Sigmoid colon (tissue), 7 donors: ENCODE measurements at regions of chr3 and their contacts with region 1.

Region 1: DNA sequence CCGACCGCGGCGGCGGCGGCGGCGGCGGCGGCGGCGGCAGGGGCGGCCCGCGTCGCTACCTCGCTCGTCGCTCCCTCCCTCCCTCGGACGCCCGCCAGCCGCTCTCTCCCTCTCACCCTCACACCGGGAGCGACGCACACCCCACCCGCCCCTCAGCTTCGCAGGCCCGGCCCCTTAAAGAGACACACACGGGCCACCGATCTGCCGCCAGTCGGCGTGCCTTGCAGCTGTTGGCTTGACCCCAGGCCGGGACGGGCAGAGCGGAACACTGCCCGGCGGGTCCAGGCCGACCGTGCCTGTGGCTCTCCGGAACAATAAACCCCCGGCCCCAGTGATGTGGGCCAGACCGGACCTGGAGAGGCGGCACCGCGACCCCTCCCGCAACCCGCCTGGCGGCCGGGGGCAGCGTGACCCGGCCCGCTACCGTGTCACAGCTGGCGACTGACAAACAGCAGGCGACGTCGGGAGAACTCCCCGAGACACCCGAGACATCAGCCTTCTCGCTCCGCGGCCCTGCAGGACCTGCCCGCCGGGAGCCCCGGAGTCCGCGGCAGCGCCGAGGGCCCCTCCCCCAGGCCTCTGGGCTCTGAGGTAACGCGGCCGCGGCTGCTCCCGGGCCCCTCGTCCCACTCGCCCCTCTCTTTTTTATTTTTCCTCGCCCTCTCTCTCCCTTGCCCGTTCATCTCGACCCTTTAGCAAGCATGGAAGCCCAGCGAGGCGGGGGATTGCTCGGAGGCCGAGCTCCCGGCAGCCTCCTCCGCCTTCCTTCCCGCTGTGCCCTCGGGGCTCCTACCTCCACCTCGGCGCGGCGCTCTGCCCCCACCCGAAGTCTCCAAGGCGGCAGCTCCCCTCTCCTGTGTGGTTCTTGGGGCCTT is at the start of gene SETD2:
- DNase-seq: peak; percentile 98
- H3K4me3 ChIP-seq: peak within 1 kb of the TSS; percentile 67 to 96 (median 82)
- H3K27ac ChIP-seq: peak within 1 kb of the TSS; percentile 92 to 98 (median 96)
- H3K4me1 ChIP-seq: peaks cover 0 to 54% (median 51%) of the 10 kb centered on the region in 4 donors
- H3K27me3 ChIP-seq: no peaks in the 10 kb centered on the region
- CTCF ChIP-seq: peak in 3 of 4 experiments; percentile 35 to 61 (median 54)
- EP300 ChIP-seq: no peak
- POLR2A ChIP-seq: peak in 1 of 2 donors; percentile 20
- total RNA-seq, gene SETD2: 52.3 to 72.6 (median 59.0) TPM

Region 2: DNA sequence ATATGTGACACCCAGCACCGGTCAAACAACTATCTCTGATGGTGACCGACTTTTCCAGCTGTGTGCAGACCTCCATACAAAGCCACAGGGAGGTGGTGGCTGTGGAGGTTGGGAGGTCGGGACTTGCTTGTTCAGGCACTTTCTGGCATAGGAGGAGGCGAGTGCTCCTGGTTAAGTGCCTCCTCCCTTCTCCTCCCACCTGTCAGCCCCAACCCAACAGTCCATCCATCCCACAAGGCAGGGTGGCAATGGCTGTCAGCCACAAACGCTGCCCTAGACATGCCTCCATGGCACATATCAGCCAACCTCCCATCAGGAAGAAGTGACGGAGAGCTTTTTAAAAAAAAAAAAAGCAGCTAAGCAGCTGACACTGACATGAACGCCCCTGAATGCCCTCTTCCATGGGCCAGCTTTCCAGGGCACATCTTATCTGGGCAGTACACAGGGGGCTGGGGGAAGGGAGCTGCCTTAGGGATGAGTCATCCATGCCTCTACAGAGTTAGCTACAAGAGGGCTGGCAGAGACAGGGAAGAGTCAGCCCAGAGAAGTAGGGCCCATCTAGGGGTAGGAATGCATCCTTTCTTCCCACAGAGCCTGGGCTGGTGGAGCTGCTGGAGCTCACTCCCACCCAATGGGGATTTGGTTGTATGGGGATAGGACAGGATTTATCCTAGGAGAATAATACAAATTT is 228.9 kb before region 1 on chr3:
- intact Hi-C with region 1: loop called (anchors 10 kb)
- DNase-seq: peak; percentile 95
- H3K4me3 ChIP-seq: no peak overlapping the region
- H3K27ac ChIP-seq: peak overlapping the region; percentile 78 to 91 (median 84)
- H3K4me1 ChIP-seq: peaks cover 0 to 97% (median 86%) of the 10 kb centered on the region in 4 donors
- H3K27me3 ChIP-seq: no peaks in the 10 kb centered on the region
- CTCF ChIP-seq: peak; percentile 50 to 82 (median 70)
- EP300 ChIP-seq: peak in 3 of 4 donors; percentile 21 to 67 (median 41)
- POLR2A ChIP-seq: no peak

Region 3: DNA sequence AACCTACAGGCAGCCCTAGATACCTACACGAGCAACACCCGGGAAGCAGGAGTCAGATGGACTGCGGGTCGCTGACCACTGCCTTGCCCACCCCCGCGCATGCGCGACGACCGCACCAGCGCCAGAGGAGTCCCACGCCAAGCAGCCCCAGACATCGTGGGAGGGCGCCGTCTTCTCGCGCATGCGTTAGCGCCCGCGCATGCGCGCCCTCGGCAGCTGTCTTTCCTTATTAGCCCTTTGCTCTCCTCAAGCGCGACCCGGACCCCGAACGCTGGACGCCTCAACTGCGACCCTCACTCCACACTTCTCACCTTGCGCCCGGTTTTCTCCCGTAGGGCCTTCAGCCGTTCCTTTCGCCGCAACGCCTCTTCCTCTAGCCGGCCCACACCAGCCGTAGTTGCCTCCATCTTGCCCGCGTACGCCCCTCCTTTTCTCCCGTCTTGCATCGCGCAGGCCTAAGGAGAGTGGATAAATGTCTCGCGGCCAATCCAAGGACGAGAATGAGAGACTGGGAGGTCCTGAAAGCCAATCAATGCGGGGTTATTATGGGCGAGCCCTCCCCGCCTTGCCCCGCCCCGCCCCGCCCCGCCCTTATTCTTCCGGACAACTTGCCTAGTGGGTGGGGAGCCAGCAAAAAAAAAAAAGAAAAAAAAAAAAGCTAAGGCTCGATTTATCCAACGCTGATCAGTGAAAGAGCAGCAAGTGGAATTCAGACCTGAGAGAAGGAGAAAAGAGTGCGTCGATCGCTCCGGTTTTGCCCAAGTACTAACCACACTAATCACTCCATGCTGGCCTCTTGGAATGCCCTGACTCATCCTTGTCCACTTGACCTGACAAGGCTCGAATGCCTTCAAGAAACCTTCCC is 187.7 kb before region 1 on chr3 and contains the start of gene CCDC12:
- intact Hi-C with region 1: loop called (anchors 5 kb)
- DNase-seq: peak; percentile 99
- H3K4me3 ChIP-seq: peak within 1 kb of the TSS; percentile 47 to 86 (median 80)
- H3K27ac ChIP-seq: peak within 1 kb of the TSS; percentile 91 to 95 (median 94)
- H3K4me1 ChIP-seq: peaks cover 0 to 71% (median 56%) of the 10 kb centered on the region in 4 donors
- H3K27me3 ChIP-seq: no peaks in the 10 kb centered on the region
- CTCF ChIP-seq: no peak
- EP300 ChIP-seq: no peak
- POLR2A ChIP-seq: peak; percentile 80 to 95
- total RNA-seq, gene CCDC12: 33.1 to 41.0 (median 36.6) TPM

Region 4: GRCh38 chr3:47009225-47010110 is 154.8 kb before region 1 on chr3:
- intact Hi-C with region 1: loop called (anchors 10 kb)
- DNase-seq: peak; percentile 97
- H3K4me3 ChIP-seq: peak overlapping the region; percentile 55 to 67 (median 57)
- H3K27ac ChIP-seq: peak overlapping the region; percentile 86 to 93 (median 90)
- H3K4me1 ChIP-seq: peaks cover 0 to 15% (median 9%) of the 10 kb centered on the region in 4 donors
- H3K27me3 ChIP-seq: no peaks in the 10 kb centered on the region
- CTCF ChIP-seq: no peak
- EP300 ChIP-seq: no peak
- POLR2A ChIP-seq: peak; percentile 85 to 87

Region 5: GRCh38 chr3:47282424-47283192 is 118.4 kb after region 1 on chr3 and contains the starts of genes KIF9 and KLHL18:
- intact Hi-C with region 1: loop called (anchors 1 kb)
- DNase-seq: peak; percentile 97
- H3K4me3 ChIP-seq: peak within 1 kb of the TSS; percentile 73 to 91 (median 85)
- H3K27ac ChIP-seq: peak within 1 kb of the TSS; percentile 85 to 96 (median 90)
- H3K4me1 ChIP-seq: peaks cover 0 to 46% (median 44%) of the 10 kb centered on the region in 4 donors
- H3K27me3 ChIP-seq: no peaks in the 10 kb centered on the region
- CTCF ChIP-seq: no peak
- EP300 ChIP-seq: peak in 2 of 4 donors; percentile 39 to 60
- POLR2A ChIP-seq: peak in 1 of 2 donors; percentile 60
- total RNA-seq, gene KIF9: 5.3 to 16.1 (median 9.0) TPM
- total RNA-seq, gene KLHL18: 10.3 to 33.8 (median 11.7) TPM

Region 6: GRCh38 chr3:47324278-47324865 is 160.1 kb after region 1 on chr3:
- intact Hi-C with region 1: loop called (anchors 5 kb)
- DNase-seq: peak; percentile 74
- H3K4me3 ChIP-seq: no peak overlapping the region
- H3K27ac ChIP-seq: no peak overlapping the region
- H3K4me1 ChIP-seq: peaks cover 0 to 4% (median 2%) of the 10 kb centered on the region in 4 donors
- H3K27me3 ChIP-seq: no peaks in the 10 kb centered on the region
- CTCF ChIP-seq: peak in 3 of 4 experiments; percentile 53 to 69 (median 54)
- EP300 ChIP-seq: no peak
- POLR2A ChIP-seq: no peak

Region 7: GRCh38 chr3:47380601-47381316 is 216.5 kb after region 1 on chr3 and contains the start of gene PTPN23:
- intact Hi-C with region 1: loop called (anchors 5 kb)
- DNase-seq: peak; percentile 100
- H3K4me3 ChIP-seq: peak within 1 kb of the TSS; percentile 86 to 99 (median 96)
- H3K27ac ChIP-seq: peak within 1 kb of the TSS; percentile 96 to 99 (median 98)
- H3K4me1 ChIP-seq: peaks cover 0 to 48% (median 30%) of the 10 kb centered on the region in 4 donors
- H3K27me3 ChIP-seq: no peaks in the 10 kb centered on the region
- CTCF ChIP-seq: no peak
- EP300 ChIP-seq: peak in 2 of 4 donors; percentile 41 to 88
- POLR2A ChIP-seq: peak; percentile 84 to 85
- total RNA-seq, gene PTPN23: 11.0 to 26.9 (median 14.7) TPM